Sciatic nerve (tissue), 2 donors: ENCODE measurements at regions of chr11 and their contacts with region 1.

Region 1: GRCh38 chr11:68297812-68298658 is 14.4 kb upstream of the LRP5 start:
- DNase-seq: peak; percentile 90
- ATAC-seq: peak; percentile 98

Region 2: DNA sequence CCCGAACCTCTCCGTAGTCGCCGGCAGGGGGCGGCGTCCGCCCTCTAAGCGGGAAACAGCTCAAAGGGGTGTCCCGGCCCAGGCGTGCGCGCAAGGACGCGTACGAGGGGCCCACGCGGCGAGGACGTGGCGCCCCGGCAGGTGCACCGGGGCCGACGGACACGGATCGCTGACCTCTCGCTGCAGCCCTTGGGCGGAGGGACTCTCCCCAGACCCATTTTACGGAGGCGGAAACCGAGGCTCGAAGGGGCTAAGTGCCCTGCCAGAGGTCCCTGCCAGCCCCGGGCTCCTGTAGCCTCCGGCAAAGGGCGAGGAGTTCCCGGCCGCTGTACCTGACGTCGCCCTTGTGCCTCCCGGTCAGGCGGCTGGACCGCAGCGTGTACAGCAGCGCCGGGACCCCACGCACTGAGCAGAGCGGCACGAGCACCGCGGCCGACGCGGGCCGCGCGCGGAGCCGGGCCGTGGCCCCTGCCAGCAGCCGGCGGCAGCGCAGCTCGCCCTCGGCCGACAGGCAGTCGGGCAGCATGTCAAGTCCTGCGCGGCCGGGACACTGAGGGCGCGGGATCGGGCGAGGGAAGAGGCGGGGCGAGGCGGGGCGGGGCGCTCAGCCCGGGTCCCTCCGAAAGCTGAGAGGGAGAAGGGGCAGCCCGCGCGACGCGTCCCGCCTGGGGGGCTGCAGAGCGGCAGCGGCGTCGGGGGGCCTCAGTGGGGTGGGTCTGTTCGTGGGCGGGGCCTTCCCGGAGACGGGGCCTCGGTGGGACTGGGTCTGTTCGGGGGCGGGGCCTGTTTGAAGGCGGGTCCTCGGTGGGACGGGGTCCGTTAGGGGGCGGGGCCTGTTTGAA is 668.4 kb before region 1 on chr11 and contains the start of gene NUDT8:
- intact Hi-C with region 1: no loop called
- DNase-seq: peak; percentile 93
- ATAC-seq: peak; percentile 64
- total RNA-seq, gene NUDT8: 7.8 TPM

Region 3: DNA sequence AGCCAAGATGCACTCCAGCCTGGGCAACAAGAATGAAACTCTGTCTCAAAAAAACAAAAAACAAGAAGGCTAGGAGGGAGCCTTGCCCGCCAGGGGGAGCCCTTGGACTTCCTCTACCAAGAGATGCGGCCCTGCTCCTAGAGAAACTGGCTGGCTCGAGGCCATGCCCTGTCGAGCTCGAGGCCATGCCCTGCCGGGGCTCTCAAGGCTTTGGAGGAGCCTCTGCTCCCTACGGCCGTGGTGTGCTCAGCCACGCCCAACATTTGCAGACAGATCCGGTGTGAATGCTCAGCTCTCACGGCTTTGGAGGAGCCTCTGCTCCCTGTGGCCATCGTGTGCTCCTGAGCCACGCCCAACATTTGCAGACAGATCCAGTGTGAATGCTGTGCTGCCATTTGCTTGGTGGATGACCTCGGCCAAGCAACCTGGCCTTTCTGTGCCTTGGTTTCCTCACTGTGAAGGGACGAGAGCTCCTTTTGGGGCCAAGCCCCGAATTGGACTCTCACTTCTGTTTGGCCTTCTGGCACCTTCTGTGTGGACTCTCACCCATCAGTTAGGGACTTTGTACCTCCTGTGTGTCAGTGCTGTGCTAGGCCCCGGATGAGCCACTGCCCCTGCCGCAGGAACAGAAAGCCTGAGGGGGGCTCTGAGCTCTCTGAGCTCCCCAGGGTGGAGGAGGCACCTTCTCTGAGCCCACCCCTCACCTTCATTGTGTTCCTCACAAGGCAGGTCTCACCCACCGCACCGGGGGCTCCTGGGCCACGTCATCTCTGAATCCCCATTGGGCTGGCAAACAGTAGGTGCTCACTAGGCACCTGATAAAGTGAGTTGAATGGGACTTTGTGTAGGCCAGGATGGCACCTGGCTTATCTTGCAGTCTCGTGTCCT is 40.3 kb before region 1 on chr11:
- intact Hi-C with region 1: loop called (anchors 5 kb)
- DNase-seq: peak; percentile 99
- ATAC-seq: peak; percentile 88

Region 4: GRCh38 chr11:68398995-68399851 is 101.2 kb after region 1 on chr11:
- intact Hi-C with region 1: no loop called
- DNase-seq: no peak
- ATAC-seq: peak; percentile 78

Region 5: DNA sequence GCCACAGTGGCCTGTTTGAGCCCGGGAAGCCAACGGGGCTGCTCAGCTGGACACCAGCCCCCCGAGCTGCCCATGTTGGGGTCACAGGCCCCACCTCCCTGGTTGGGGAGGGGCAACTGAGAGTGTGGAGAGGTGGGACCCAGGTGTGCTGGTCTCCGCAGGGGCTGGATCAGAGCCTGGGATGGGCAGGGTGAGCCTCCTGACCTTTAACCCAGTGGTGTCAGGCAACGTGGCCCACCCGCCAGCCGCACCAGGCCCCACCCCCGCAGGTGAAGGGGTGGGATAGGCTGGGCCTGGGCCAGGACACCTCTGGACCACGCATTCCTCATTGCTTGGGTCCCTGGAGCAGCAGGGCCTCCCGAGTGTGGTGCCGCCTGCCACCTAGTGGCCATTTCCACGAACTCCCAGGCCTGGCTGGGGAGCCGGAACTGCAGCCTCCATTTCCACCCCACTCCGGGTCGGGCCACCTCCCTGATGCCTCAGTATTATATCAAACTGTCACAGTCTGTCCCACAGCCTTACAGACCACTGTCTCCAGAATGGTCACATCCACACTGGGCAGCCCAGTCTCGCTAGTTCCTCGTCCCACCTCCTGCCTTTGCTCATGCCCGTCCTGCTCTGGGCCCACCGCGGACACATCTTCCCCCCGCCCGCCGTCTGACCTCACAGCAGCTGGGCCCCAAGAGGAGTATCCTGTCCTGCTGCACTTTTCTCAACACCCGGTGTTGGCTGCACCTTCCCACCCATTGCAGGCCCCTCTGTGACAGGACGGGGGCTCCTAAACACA is 149.2 kb after region 1 on chr11:
- intact Hi-C with region 1: no loop called
- DNase-seq: peak; percentile 90
- ATAC-seq: peak; percentile 93